Gastrocnemius medialis (tissue), 4 donors: ENCODE measurements at regions of chr19 and their contacts with region 1.

Region 1: GRCh38 chr19:37217855-37218591 is at the start of gene ZNF383:
- DNase-seq: peak; percentile 81 to 83
- ATAC-seq: peak; percentile 95 to 96
- H3K4me3 ChIP-seq: peak within 1 kb of the TSS; percentile 82 to 92 (median 88)
- H3K27ac ChIP-seq: peak within 1 kb of the TSS; percentile 89 to 93 (median 91)
- H3K4me1 ChIP-seq: peaks cover 3 to 11% of the 10 kb centered on the region in 2 donors
- H3K27me3 ChIP-seq: no peaks in the 10 kb centered on the region
- CTCF ChIP-seq: no peak
- POLR2A ChIP-seq: peak; percentile 7 to 38
- total RNA-seq, gene ZNF383: 2.3 to 8.4 (median 4.0) TPM

Region 2: DNA sequence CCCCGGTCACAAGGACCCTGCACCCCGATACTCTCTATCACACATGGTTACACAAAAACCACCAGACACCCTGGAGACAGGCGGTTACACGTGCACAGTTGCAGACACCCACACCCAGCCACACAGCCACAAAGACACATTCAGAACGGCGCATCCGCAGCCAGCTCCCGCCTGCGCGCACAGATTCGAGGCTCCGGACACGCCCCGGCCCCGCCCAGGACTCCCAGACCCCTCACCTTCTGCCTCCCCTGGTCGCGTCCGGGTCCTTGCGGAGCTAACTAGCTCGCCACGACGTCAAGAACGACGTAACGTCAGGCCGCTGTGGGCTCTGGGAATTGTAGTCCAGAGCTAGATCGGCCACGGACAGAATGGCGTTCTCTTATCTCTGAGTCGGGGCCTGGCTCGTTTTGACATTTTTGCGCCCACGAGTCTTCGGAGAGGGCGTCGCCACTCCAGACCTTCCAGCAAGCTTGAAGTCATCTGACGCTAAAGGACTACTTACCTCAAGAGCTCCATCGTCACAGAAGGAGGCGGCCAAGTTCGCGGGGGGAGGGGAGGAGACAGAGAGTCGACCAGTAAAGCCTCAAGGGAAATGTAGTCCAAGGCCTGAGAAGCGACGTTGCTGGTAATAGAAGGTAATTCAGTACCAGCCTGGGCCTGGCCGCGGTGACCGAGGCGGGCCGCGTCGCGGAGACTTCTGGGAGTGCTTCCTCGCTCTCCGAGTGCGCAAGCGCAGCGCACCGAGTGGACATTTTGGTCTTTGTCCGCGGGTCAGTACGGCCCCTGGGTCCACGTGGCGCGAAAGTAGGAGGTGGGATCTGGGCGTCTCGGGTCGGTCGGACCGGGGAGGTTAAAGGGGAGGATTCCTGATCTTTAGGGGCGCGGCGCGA is 1003.4 kb before region 1 on chr19 and contains the starts of genes ZNF146 and ZNF565:
- in situ Hi-C with region 1: no loop called
- intact Hi-C with region 1: loop called (anchors 10 kb)
- DNase-seq: peak; percentile 96 to 98
- ATAC-seq: peak; percentile 98
- H3K4me3 ChIP-seq: peak within 1 kb of the TSS; percentile 76 to 93 (median 77)
- H3K27ac ChIP-seq: peak within 1 kb of the TSS; percentile 89 to 98 (median 96)
- H3K4me1 ChIP-seq: peaks cover 28 to 29% of the 10 kb centered on the region in 2 donors
- H3K27me3 ChIP-seq: no peaks in the 10 kb centered on the region
- CTCF ChIP-seq: peak in 1 of 5 experiments; percentile 8
- POLR2A ChIP-seq: peak; percentile 78 to 87
- total RNA-seq, gene ZNF146: 47.8 to 108 (median 91.2) TPM
- total RNA-seq, gene ZNF565: 1.7 to 5.3 (median 2.3) TPM

Region 3: GRCh38 chr19:36665832-36666231 is 552.2 kb before region 1 on chr19:
- in situ Hi-C with region 1: no loop called
- intact Hi-C with region 1: loop called (anchors 5 kb)
- DNase-seq: no peak
- ATAC-seq: no peak
- H3K4me3 ChIP-seq: peak overlapping the region; percentile 82 to 97 (median 92)
- H3K27ac ChIP-seq: no peak overlapping the region
- H3K4me1 ChIP-seq: peaks cover 6 to 9% of the 10 kb centered on the region in 2 donors
- H3K27me3 ChIP-seq: no peaks in the 10 kb centered on the region
- CTCF ChIP-seq: no peak
- POLR2A ChIP-seq: no peak

Region 4: DNA sequence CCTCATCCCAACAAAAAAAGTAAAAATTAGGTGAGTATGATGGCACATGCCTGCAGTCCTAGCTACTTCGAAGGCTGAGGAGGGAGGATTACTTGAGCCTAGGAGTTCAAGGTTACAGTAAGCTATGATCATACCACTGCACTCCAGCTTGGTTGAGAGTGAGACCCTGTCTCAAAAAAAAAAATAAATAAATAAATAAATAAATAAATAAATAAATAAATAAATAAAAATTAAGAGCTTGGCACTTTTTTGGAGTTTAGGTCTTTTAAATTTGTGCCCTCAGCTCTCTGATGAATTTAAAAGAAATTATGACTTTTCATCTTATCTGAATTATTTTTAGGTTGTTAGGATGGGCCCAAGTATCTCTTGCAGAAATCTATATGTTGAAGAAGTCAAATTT is 130.9 kb before region 1 on chr19:
- in situ Hi-C with region 1: no loop called
- intact Hi-C with region 1: no loop called
- DNase-seq: no peak
- ATAC-seq: no peak
- H3K4me3 ChIP-seq: no peak overlapping the region
- H3K27ac ChIP-seq: no peak overlapping the region
- H3K4me1 ChIP-seq: no peaks in the 10 kb centered on the region
- H3K27me3 ChIP-seq: no peaks in the 10 kb centered on the region
- CTCF ChIP-seq: no peak
- POLR2A ChIP-seq: no peak

Region 5: DNA sequence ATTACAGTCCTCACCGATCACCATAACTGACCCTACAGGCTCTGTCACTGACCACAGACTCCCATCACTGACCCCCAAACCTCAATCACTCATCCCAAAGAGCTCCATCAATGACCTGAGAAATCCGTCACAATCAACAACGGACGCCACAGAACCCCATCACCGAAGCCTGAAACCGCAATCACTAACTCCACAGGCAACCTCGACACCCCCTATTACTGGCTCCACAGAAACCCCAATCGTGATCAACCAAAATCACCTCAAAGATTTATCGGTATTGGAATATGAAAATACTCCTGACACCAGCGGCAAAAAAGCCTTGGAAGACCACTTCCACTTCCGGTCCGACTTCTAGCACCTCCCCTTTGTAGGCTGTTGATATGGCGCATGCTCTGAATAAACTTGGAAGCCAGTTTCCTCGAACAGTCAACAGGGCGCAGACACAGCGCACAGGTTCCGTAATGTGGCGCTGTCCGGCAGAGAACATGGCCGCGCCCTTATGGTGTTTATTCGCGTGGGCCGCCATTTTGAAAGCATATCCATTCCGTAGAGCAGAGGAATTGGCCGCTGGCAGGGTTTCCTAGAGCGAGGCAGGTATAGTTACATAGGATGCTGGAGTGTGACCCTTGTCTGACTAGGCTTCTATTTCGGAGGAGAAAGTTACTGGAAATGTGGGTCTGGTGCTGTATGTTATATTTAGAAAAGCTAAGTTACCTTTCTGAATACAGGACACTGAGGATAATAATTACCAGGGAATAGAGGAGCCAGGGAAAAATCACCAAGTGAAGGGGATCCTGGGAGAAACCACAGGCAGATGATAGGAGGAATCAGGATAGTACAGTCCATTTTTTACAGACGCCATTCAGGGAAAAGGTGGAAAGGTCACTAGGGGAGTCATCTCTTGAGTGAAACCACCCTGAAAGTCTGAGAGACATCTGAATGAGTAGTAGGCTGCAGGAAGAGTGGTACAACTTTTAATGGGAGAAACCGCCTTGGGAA is 45.4 kb before region 1 on chr19 and contains the start of gene ZNF585A:
- in situ Hi-C with region 1: no loop called
- intact Hi-C with region 1: loop called (anchors 1 kb)
- DNase-seq: peak; percentile 90 to 93
- ATAC-seq: peak; percentile 100
- H3K4me3 ChIP-seq: peak within 1 kb of the TSS; percentile 74 to 85 (median 80)
- H3K27ac ChIP-seq: peak within 1 kb of the TSS; percentile 80 to 90 (median 84)
- H3K4me1 ChIP-seq: peaks cover 7 to 12% of the 10 kb centered on the region in 2 donors
- H3K27me3 ChIP-seq: no peaks in the 10 kb centered on the region
- CTCF ChIP-seq: peak in 2 of 5 experiments; percentile 21 to 32
- POLR2A ChIP-seq: peak in 1 of 2 donors; percentile 14
- total RNA-seq, gene ZNF585A: 2.0 to 10.5 (median 6.0) TPM

Region 6: DNA sequence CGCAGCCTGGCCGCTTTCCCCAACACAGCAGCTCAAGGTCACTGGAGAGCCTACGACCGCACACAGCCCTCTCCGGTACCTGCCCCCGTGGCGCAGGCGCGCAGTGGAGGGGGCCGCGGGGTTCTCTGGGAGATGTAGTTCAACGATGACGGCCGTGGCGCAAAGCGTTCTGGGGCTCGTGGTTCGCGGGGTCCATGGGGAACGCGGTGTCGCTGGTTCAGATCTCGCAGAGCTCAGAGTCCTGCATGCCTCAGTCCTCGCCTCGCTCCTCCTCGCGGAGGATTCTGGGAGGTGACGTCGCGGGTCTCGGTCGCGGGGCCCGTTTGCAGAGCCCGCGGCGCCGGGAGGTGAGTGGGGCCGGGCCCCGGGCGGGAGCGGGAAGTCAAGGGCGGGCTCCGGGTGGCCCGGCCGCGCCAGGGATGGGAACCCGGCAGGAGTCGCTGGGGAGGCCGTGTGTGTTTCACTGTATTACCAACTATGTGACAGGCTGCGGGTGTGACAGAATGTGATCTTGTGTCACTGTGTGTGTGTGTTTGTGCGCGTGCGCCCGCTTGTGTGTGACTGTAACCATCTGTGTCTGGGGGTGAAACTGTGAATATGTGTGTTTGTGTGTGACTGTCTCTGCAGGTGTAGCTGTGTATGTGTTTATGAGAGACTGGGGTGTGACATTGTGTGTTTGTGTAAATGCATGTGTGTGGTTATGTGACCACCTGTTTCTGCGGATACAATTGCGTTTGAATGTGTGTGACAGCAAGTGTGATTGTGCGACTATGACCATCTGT is 153.0 kb after region 1 on chr19 and contains the start of gene ZNF527:
- in situ Hi-C with region 1: no loop called
- intact Hi-C with region 1: loop called (anchors 2 kb)
- DNase-seq: peak; percentile 95 to 97
- ATAC-seq: peak; percentile 98 to 99
- H3K4me3 ChIP-seq: peak within 1 kb of the TSS; percentile 73 to 90 (median 88)
- H3K27ac ChIP-seq: peak within 1 kb of the TSS; percentile 84 to 91 (median 88)
- H3K4me1 ChIP-seq: peaks cover 7 to 8% of the 10 kb centered on the region in 2 donors
- H3K27me3 ChIP-seq: no peaks in the 10 kb centered on the region
- CTCF ChIP-seq: no peak
- POLR2A ChIP-seq: peak; percentile 76 to 88
- total RNA-seq, gene ZNF527: 2.0 to 6.0 (median 2.8) TPM

Region 7: GRCh38 chr19:37594304-37594981 is 376.4 kb after region 1 on chr19 and contains the starts of genes ZNF540 and ZNF571:
- in situ Hi-C with region 1: no loop called
- intact Hi-C with region 1: loop called (anchors 10 kb)
- DNase-seq: peak; percentile 85 to 89
- ATAC-seq: peak; percentile 98 to 99
- H3K4me3 ChIP-seq: peak within 1 kb of the TSS; percentile 78 to 95 (median 86)
- H3K27ac ChIP-seq: peak within 1 kb of the TSS; percentile 87 to 95 (median 90)
- H3K4me1 ChIP-seq: peaks cover 17 to 19% of the 10 kb centered on the region in 2 donors
- H3K27me3 ChIP-seq: no peaks in the 10 kb centered on the region
- CTCF ChIP-seq: no peak
- POLR2A ChIP-seq: peak; percentile 61 to 63
- total RNA-seq, gene ZNF540: 0.46 to 1.5 (median 1.3) TPM
- total RNA-seq, gene ZNF571: 1.5 to 2.5 (median 1.8) TPM